A673 (cell line): ENCODE measurements at regions of chr13 and their contacts with region 1.

Region 1: GRCh38 chr13:83577183-83577582 is 305.1 kb downstream of the SLITRK1 start:
- DNase-seq: no peak
- H3K4me3 ChIP-seq: no peak overlapping the region
- H3K27ac ChIP-seq: no peak overlapping the region
- H3K4me1 ChIP-seq: no peaks in the 10 kb centered on the region
- H3K27me3 ChIP-seq: no peaks in the 10 kb centered on the region
- CTCF ChIP-seq: no peak

Region 2: GRCh38 chr13:83633746-83634145 is 56.6 kb after region 1 on chr13:
- CTCF ChIA-PET with region 1: no interaction called
- POLR2A ChIA-PET with region 1: no interaction called
- intact Hi-C with region 1: no loop called
- DNase-seq: no peak
- H3K4me3 ChIP-seq: no peak overlapping the region
- H3K27ac ChIP-seq: no peak overlapping the region
- H3K4me1 ChIP-seq: no peaks in the 10 kb centered on the region
- H3K27me3 ChIP-seq: no peaks in the 10 kb centered on the region
- CTCF ChIP-seq: no peak

Region 3: GRCh38 chr13:83773961-83774360 is 196.8 kb after region 1 on chr13:
- CTCF ChIA-PET with region 1: no interaction called
- POLR2A ChIA-PET with region 1: no interaction called
- intact Hi-C with region 1: no loop called
- DNase-seq: no peak
- H3K4me3 ChIP-seq: no peak overlapping the region
- H3K27ac ChIP-seq: no peak overlapping the region
- H3K4me1 ChIP-seq: no peaks in the 10 kb centered on the region
- H3K27me3 ChIP-seq: no peaks in the 10 kb centered on the region
- CTCF ChIP-seq: no peak

Region 4: DNA sequence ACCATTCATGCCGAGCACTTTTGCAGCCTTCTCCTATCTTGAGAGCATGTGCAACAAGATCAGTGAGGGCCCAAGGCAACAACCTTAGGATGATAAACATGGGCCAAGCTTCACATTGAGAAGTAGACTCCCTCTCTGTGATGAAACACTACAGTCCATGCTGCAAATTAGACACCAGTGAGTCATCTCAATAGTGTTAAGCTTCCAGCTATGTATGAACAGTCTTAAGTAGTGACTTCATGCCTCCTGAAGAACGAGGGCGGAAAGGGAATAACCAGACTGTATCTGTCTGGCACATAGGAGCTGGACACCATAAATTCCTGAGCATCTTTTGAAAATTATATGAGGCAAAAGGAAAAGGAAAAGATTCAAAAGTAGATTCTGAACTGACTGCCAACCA is 614.9 kb after region 1 on chr13:
- CTCF ChIA-PET with region 1: no interaction called
- POLR2A ChIA-PET with region 1: no interaction called
- intact Hi-C with region 1: loop called (anchors 10 kb)
- DNase-seq: peak; percentile 76
- H3K4me3 ChIP-seq: no peak overlapping the region
- H3K27ac ChIP-seq: peak overlapping the region; percentile 34
- H3K4me1 ChIP-seq: peaks cover 27% of the 10 kb centered on the region
- H3K27me3 ChIP-seq: no peaks in the 10 kb centered on the region
- CTCF ChIP-seq: no peak

Region 5: DNA sequence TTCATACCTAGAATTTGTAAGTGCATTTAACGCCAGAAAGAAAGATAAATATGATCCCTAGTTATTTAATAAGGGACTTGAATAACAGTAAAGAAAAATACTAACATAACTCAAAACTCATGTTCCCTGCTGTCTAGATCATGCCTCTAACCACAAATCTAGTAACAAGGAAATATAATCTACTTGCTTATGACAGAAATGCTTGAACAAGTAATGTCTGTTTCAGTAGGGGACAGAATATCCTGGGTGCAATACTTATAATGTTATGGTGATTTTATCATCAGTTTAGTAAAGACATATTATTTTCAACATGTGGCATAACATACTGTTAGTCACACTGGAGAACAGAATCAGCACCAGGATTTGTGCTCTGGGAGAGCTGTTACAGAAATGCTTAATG is 1167.0 kb after region 1 on chr13:
- CTCF ChIA-PET with region 1: no interaction called
- POLR2A ChIA-PET with region 1: no interaction called
- intact Hi-C with region 1: loop called (anchors 2 kb)
- DNase-seq: peak; percentile 14
- H3K4me3 ChIP-seq: no peak overlapping the region
- H3K27ac ChIP-seq: peak overlapping the region; percentile 60
- H3K4me1 ChIP-seq: peaks cover 21% of the 10 kb centered on the region
- H3K27me3 ChIP-seq: no peaks in the 10 kb centered on the region
- CTCF ChIP-seq: no peak